Right lobe of liver (tissue), 6 donors: ENCODE measurements at regions of chr3 and their contacts with region 1.

Region 1: GRCh38 chr3:146218880-146219866 is 31.7 kb downstream of the PLSCR4 start:
- DNase-seq: no peak
- ATAC-seq: no peak
- H3K4me3 ChIP-seq: no peak overlapping the region
- H3K27ac ChIP-seq: no peak overlapping the region
- H3K4me1 ChIP-seq: peaks cover 0 to 28% (median 8%) of the 10 kb centered on the region in 4 donors
- H3K27me3 ChIP-seq: no peaks in the 10 kb centered on the region
- CTCF ChIP-seq: peak; percentile 74 to 77 (median 75)
- POLR2A ChIP-seq: no peak

Region 2: DNA sequence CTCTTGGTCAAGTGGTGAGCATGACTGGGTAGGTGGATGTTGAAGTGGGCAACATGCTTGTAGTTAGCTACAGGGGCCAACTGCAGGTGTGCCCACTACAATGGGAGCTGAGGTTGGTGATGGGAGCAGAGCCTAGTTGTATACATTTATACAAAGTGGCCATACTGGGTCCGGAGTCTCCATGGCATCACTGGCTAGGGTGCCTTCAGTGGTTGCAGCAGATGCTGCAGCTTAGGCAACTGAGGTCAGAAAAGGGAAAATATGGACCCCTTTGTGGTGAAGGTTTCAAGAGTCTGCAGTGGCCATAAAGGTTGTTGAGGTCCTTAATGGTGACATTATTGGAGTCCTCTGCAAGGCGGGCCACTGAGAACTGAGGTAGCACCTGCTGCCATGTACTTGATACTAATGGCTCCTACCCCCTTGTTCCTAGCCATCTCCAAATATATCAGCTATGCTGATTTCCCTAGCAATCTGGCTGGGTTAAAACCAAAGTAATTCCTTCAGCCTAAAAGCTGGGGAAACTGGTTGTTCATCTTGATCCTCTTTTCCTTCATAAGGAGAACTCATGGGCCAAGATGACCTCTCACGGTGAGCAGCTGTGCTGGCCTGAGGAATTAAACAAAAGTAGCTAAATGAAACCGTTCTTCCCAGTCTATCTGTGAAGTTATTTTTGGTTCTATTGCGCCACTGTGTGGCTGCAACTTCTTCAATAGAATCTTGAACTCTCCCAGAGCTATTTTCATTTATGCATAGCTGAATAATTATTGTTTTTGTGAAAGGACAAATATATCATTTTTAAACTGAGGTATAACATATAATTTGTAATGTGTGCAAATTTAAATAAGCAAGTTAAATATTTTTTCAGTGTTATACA is 107.7 kb after region 1 on chr3:
- intact Hi-C with region 1: loop called (anchors 10 kb)
- DNase-seq: peak in 1 of 3 donors; percentile 54
- ATAC-seq: peak; percentile 98 to 100 (median 99)
- H3K4me3 ChIP-seq: no peak overlapping the region
- H3K27ac ChIP-seq: no peak overlapping the region
- H3K4me1 ChIP-seq: no peaks in the 10 kb centered on the region
- H3K27me3 ChIP-seq: no peaks in the 10 kb centered on the region
- CTCF ChIP-seq: peak; percentile 60 to 72 (median 66)
- POLR2A ChIP-seq: no peak

Region 3: DNA sequence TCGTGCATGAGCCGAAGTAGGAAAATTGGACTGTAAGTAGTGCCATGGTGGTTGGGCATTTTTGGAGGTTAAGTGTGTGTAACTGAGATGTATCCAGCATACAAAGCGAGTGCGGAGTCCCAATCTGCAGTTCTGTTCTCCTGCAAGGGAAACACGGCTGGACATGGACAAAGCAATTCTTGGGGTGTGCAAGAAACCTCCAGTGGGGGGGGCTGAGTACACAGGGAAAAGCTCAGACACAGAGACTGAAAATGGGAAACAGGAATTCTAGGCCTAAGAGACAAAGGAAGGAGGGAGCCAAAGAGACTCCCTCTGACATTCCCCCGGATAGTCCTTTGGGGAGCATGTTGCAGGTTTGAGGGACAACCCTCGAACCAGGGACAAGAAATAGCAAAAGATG is 115.0 kb after region 1 on chr3:
- intact Hi-C with region 1: loop called (anchors 10 kb)
- DNase-seq: no peak
- ATAC-seq: peak in 2 of 4 donors; percentile 20 to 41
- H3K4me3 ChIP-seq: no peak overlapping the region
- H3K27ac ChIP-seq: no peak overlapping the region
- H3K4me1 ChIP-seq: no peaks in the 10 kb centered on the region
- H3K27me3 ChIP-seq: no peaks in the 10 kb centered on the region
- CTCF ChIP-seq: peak in 3 of 4 donors; percentile 10 to 26 (median 14)
- POLR2A ChIP-seq: no peak